Heart right ventricle (tissue), 16 donors: ENCODE measurements at regions of chr15 and their contacts with region 1.

Region 1: GRCh38 chr15:61499376-61499775 is 270.3 kb upstream of the RORA start:
- DNase-seq: no peak
- ATAC-seq: no peak
- H3K4me3 ChIP-seq: no peak overlapping the region
- H3K27ac ChIP-seq: no peak overlapping the region
- H3K4me1 ChIP-seq: no peaks in the 10 kb centered on the region
- H3K27me3 ChIP-seq: peaks cover 0 to 31% (median 19%) of the 10 kb centered on the region in 7 donors
- CTCF ChIP-seq: no peak

Region 2: DNA sequence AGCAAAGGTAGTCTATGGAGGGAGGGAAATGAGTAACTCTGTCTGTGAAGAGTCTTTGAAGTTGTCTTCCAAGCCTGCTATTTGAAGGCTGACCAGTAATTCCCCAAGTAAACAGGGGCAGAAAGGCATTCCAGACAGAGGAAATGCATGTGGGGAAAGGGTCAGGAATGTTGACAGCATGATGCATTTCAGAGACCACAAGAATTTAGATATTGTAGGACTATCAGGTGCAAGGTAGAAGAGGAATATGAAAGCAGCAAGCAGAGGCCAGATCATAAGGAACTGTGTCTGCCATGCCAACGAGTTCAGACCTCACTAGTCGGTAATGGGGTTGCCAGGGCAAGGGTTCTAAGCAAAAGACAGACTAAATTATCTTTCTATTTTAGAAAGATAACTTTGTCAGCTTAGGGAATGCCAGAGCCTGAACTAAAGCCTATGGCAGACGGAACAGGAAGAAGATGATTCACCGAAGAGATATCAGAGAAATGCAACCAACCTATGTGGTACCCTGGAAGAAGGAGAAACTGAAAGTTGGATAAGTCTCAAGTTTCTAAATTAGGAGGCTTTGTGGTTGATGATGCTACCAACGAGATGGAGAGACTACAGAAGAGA is 56.8 kb after region 1 on chr15:
- intact Hi-C with region 1: loop called in 1 of 10 experiments (anchors 10 kb)
- DNase-seq: no peak
- ATAC-seq: no peak
- H3K4me3 ChIP-seq: no peak overlapping the region
- H3K27ac ChIP-seq: no peak overlapping the region
- H3K4me1 ChIP-seq: no peaks in the 10 kb centered on the region
- H3K27me3 ChIP-seq: peaks cover 0 to 34% (median 0%) of the 10 kb centered on the region in 7 donors
- CTCF ChIP-seq: no peak